ENCODE measurements at regions of chr10 and their contacts with region 1.

Region 1: DNA sequence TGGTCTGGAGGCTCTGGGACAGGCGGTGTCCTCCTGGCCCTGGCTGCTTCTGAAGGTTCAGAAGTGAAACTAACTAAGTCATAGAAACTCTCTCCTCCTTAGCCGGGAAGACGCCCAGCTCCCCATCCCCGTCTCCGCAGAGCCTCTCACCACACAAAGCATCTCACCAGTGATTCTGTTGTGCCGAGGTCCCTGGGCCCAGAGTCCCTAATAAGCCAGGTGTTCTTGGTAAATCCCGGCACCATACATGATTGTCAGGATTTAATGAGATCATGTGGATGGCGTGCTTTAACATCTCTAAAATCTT is 9.4 kb downstream of the HKDC1 start:
- DNase-seq: no peak
- H3K4me3 Mint-ChIP-seq: peak overlapping the region; percentile 76
- H3K27ac Mint-ChIP-seq: peak overlapping the region; percentile 98
- H3K4me1 Mint-ChIP-seq: peaks cover 86% of the 10 kb centered on the region
- H3K27me3 Mint-ChIP-seq: peaks cover 3% of the 10 kb centered on the region

Region 2: GRCh38 chr10:69123747-69124562 is 105.6 kb before region 1 on chr10 and contains the start of gene VPS26A:
- CTCF ChIA-PET with region 1: no interaction called
- POLR2A ChIA-PET with region 1: interaction called, 11 read pairs
- DNase-seq: peak; percentile 99
- H3K4me3 Mint-ChIP-seq: peak within 1 kb of the TSS; percentile 92
- H3K27ac Mint-ChIP-seq: peak within 1 kb of the TSS; percentile 88
- H3K4me1 Mint-ChIP-seq: peaks cover 37% of the 10 kb centered on the region
- H3K27me3 Mint-ChIP-seq: peaks cover 3% of the 10 kb centered on the region
- total RNA-seq, gene VPS26A: 57.1 to 63.4 TPM

Region 3: DNA sequence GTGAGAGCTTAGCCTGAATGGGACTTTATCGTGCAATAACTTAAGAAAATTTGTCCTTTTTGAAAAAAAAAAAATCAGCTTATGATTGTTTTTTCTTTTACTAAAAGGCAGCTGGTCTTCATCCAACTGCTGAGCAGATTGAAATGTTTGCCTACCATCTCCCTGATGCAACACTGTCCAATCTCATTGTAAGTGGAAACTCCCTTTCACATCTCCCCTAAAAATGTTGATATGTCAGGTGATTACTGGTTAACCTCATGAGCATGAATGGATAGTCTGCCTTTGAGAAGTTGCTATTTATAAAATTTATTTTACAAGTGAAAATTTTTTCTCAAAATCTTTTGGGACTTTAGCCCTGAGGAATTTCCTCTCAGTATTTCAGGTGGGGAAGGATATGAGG is 27.2 kb before region 1 on chr10:
- CTCF ChIA-PET with region 1: interaction called, 14 read pairs
- POLR2A ChIA-PET with region 1: interaction called, 48 read pairs
- DNase-seq: no peak
- H3K4me3 Mint-ChIP-seq: peak overlapping the region; percentile 46
- H3K27ac Mint-ChIP-seq: peak overlapping the region; percentile 75
- H3K4me1 Mint-ChIP-seq: peaks cover 64% of the 10 kb centered on the region
- H3K27me3 Mint-ChIP-seq: no peaks in the 10 kb centered on the region

Region 4: GRCh38 chr10:69318106-69318866 is 88.7 kb after region 1 on chr10:
- CTCF ChIA-PET with region 1: no interaction called
- POLR2A ChIA-PET with region 1: interaction called, 14 read pairs
- DNase-seq: peak; percentile 92
- H3K4me3 Mint-ChIP-seq: peak overlapping the region; percentile 97
- H3K27ac Mint-ChIP-seq: peak overlapping the region; percentile 94
- H3K4me1 Mint-ChIP-seq: peaks cover 55% of the 10 kb centered on the region
- H3K27me3 Mint-ChIP-seq: no peaks in the 10 kb centered on the region

Region 5: DNA sequence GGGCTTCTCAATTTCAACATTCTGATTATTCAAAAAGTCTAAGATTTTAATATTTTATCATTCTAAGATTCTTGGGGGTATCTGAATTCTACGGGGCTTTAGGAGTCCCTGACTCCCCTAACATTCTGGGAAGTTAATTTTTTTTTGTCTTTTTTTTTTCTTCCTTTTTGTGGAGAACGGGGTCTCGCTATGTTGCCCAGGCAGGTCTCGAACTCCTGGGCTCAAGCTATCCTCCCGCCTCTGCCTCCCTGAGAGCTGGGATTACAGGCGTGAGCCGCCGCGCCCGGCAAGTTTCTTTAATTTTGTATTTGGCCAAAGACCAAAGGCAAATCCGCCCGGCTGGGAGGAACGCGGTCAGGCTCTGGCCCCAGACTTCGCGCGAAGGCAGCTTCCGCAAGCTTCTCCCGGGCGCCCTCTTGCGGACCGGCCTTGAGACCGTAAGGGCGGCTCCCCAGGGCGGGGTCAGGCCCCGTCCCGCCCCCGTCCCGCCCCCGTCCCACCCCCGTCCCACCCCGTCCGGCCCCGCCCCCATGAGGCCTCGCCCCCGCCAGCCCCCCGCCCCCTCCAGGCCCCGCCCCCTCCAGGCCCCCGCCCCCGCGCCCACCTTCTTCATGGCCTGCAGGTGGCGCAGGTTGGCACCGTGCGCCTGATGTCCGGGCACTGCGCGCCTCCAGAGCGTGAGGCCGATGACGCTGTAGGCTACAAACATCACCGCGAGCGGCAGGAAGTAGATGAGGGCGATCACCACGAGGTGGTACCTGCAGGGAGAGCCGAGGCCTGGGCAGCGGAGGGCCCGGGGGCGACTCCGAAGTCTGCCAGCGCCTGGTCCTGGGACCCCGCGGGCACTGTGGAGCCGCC is 179.0 kb after region 1 on chr10:
- CTCF ChIA-PET with region 1: interaction called, 10 read pairs
- POLR2A ChIA-PET with region 1: interaction called, 6 read pairs
- DNase-seq: peak; percentile 93
- H3K4me3 Mint-ChIP-seq: peak overlapping the region; percentile 71
- H3K27ac Mint-ChIP-seq: peak overlapping the region; percentile 69
- H3K4me1 Mint-ChIP-seq: peaks cover 34% of the 10 kb centered on the region
- H3K27me3 Mint-ChIP-seq: no peaks in the 10 kb centered on the region

Measured in activated CD4-positive, alpha-beta memory T cell treated with anti-CD3 and anti-CD28 coated beads, Interleukin-2, amount 10 ng/mL, durations not matched to agents 7 days and 5 days (primary cell).